ENCODE measurements at regions of chr5 and their contacts with region 1.

Region 1: GRCh38 chr5:119315516-119315949 is 40.3 kb upstream of the TNFAIP8 start:
- DNase-seq: peak; percentile 74
- ATAC-seq: peak; percentile 77
- H3K4me3 Mint-ChIP-seq: peak overlapping the region; percentile 40
- H3K27ac Mint-ChIP-seq: peak overlapping the region; percentile 87
- H3K4me1 Mint-ChIP-seq: peaks cover 94% of the 10 kb centered on the region
- H3K27me3 Mint-ChIP-seq: no peaks in the 10 kb centered on the region

Region 2: DNA sequence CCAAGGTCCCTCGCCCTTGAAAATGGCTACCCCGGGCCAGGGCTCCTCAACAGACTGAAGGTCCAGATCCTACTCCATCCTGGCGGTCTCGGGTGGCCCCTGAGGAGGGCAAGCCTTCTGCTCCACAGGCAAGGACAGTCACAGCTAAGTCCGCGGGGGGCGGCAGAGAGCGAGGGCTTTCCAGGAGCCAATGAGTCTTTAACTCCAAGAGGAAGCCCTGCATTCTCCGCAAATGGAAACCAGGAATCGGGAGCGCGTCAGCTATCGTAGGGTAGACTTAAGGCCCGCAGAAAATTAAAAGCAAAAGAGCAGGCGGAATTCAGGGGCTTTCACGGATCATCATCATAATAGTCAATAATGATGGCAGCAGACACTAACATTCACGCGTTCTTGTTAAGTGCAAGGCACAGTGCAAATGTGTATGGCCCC is 47.6 kb before region 1 on chr5:
- CTCF ChIA-PET with region 1: interaction called, 20 read pairs
- POLR2A ChIA-PET with region 1: interaction called, 7 read pairs
- DNase-seq: peak; percentile 94
- ATAC-seq: peak; percentile 70
- H3K4me3 Mint-ChIP-seq: peak overlapping the region; percentile 98
- H3K27ac Mint-ChIP-seq: peak overlapping the region; percentile 96
- H3K4me1 Mint-ChIP-seq: peaks cover 56% of the 10 kb centered on the region
- H3K27me3 Mint-ChIP-seq: no peaks in the 10 kb centered on the region

Region 3: GRCh38 chr5:119290161-119290569 is 25.4 kb before region 1 on chr5:
- CTCF ChIA-PET with region 1: interaction called, 16 read pairs
- POLR2A ChIA-PET with region 1: interaction called, 4 read pairs
- DNase-seq: no peak
- ATAC-seq: peak; percentile 34
- H3K4me3 Mint-ChIP-seq: peak overlapping the region; percentile 48
- H3K27ac Mint-ChIP-seq: peak overlapping the region; percentile 94
- H3K4me1 Mint-ChIP-seq: peaks cover 90% of the 10 kb centered on the region
- H3K27me3 Mint-ChIP-seq: no peaks in the 10 kb centered on the region

Region 4: DNA sequence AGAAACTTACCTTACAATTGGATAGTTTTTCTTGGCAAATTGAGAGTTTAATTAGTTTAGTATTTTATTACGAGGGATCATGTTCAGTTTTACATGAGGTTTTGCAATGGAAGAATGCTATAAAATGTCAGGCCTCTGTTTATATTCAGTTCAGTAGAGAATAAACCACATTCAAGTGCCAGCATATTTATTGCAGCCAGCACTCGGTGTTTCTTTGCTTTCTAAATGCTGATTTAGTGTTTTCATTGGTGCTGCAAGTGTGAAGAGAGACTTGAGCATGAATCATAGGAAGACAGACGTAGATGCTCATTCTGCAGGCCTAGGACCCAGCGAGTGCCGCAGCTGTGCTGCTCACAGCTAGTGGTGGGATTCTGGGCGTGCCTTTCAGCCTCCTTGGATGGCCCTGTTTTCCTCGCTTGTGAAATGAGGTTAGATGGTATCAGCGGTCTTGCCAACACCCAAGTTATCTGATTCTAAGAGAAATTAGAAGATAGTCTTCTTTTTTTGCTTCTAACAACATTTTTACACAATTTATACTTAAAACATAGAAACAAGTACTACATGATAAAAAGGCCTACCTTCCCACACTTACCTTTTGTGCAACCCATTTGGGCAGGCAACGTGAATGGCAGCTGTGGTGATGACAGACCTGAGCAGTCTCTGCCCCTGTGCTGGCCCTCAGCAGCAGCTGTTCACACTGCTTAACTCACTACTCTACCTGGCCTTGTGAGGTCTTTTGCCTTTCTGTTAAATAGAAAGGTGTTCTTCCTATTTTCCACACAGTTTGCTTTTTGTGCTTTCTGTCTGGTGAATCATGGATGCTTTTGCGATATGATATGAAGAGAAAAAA is 13.4 kb after region 1 on chr5:
- CTCF ChIA-PET with region 1: interaction called, 274 read pairs
- POLR2A ChIA-PET with region 1: interaction called, 47 read pairs
- DNase-seq: peak; percentile 72
- ATAC-seq: peak; percentile 62
- H3K4me3 Mint-ChIP-seq: peak overlapping the region; percentile 45
- H3K27ac Mint-ChIP-seq: peak overlapping the region; percentile 95
- H3K4me1 Mint-ChIP-seq: peaks cover 82% of the 10 kb centered on the region
- H3K27me3 Mint-ChIP-seq: no peaks in the 10 kb centered on the region

Region 5: GRCh38 chr5:119360905-119361593 is 45.5 kb after region 1 on chr5:
- CTCF ChIA-PET with region 1: interaction called, 28 read pairs
- POLR2A ChIA-PET with region 1: interaction called, 7 read pairs
- DNase-seq: no peak
- ATAC-seq: no peak
- H3K4me3 Mint-ChIP-seq: no peak overlapping the region
- H3K27ac Mint-ChIP-seq: peak overlapping the region; percentile 13
- H3K4me1 Mint-ChIP-seq: peaks cover 96% of the 10 kb centered on the region
- H3K27me3 Mint-ChIP-seq: no peaks in the 10 kb centered on the region

Region 6: GRCh38 chr5:119478781-119479180 is 163.2 kb after region 1 on chr5:
- CTCF ChIA-PET with region 1: no interaction called
- POLR2A ChIA-PET with region 1: no interaction called
- DNase-seq: no peak
- ATAC-seq: no peak
- H3K4me3 Mint-ChIP-seq: no peak overlapping the region
- H3K27ac Mint-ChIP-seq: no peak overlapping the region
- H3K4me1 Mint-ChIP-seq: no peaks in the 10 kb centered on the region
- H3K27me3 Mint-ChIP-seq: no peaks in the 10 kb centered on the region